ENCODE measurements at regions of chr10 and their contacts with region 1.

Region 1: DNA sequence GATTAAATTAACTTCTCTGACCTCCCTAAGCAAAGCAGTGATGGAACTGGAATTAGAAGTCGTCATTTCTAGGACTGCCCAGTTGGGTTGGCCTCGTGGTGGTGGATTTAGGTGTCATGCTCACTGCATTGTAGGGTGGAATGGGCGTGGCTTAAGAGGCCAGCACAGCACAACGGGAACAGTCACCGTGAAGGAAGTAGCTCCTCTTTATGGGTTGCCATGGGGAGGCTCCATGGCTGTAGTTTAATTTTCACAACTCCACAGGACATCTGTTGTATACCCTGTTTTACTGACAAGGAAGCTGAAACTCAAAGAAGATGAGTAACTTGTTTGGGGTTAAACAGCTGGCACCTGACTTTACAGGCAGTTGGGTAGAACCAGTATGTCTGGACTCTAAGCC is 208.3 kb downstream of the CELF2 start:
- DNase-seq: no peak
- ATAC-seq: peak; percentile 79
- H3K4me3 ChIP-seq: 0 out of 2 replicates have a peak overlapping the region, but pooled peaks have one; percentile 8
- H3K27ac ChIP-seq: peak overlapping the region; percentile 77
- H3K4me1 ChIP-seq: peaks cover 62% of the 10 kb centered on the region
- H3K27me3 ChIP-seq: no peaks in the 10 kb centered on the region
- CTCF ChIP-seq: no peak
- EP300 ChIP-seq: 0 out of 4 replicates have a peak, but pooled peaks of 1 of the 2 experiments have one; percentile 23
- POLR2A ChIP-seq: no peak
- RAD21 ChIP-seq: no peak

Region 2: GRCh38 chr10:11004144-11005077 is 221.5 kb before region 1 on chr10:
- CTCF ChIA-PET with region 1: no interaction called
- POLR2A ChIA-PET with region 1: no interaction called
- RAD21 ChIA-PET with region 1: no interaction called
- SMC1A ChIA-PET with region 1: no interaction called
- in situ Hi-C with region 1: no loop called
- intact Hi-C with region 1: no loop called
- DNase-seq: no peak
- ATAC-seq: no peak
- H3K4me3 ChIP-seq: no peak overlapping the region
- H3K27ac ChIP-seq: no peak overlapping the region
- H3K4me1 ChIP-seq: no peaks in the 10 kb centered on the region
- H3K27me3 ChIP-seq: no peaks in the 10 kb centered on the region; a peak in 1 of 4 replicates
- CTCF ChIP-seq: no peak
- EP300 ChIP-seq: no peak
- POLR2A ChIP-seq: no peak
- RAD21 ChIP-seq: no peak

Region 3: GRCh38 chr10:11170993-11171851 is 54.7 kb before region 1 on chr10:
- CTCF ChIA-PET with region 1: interaction called, 6 read pairs
- POLR2A ChIA-PET with region 1: interaction called, 4 read pairs
- RAD21 ChIA-PET with region 1: interaction called, 4 read pairs
- SMC1A ChIA-PET with region 1: interaction called, 17 read pairs
- in situ Hi-C with region 1: no loop called
- intact Hi-C with region 1: no loop called
- DNase-seq: no peak
- ATAC-seq: peak; percentile 23
- H3K4me3 ChIP-seq: peak overlapping the region; percentile 96
- H3K27ac ChIP-seq: peak overlapping the region; percentile 95
- H3K4me1 ChIP-seq: peaks cover 26% of the 10 kb centered on the region
- H3K27me3 ChIP-seq: no peaks in the 10 kb centered on the region
- CTCF ChIP-seq: no peak
- EP300 ChIP-seq: 0 out of 4 replicates have a peak, but pooled peaks of 1 of the 2 experiments have one; percentile 14
- POLR2A ChIP-seq: peak; percentile 33; the same call in 1 of the 2 replicates
- RAD21 ChIP-seq: no peak

Region 4: DNA sequence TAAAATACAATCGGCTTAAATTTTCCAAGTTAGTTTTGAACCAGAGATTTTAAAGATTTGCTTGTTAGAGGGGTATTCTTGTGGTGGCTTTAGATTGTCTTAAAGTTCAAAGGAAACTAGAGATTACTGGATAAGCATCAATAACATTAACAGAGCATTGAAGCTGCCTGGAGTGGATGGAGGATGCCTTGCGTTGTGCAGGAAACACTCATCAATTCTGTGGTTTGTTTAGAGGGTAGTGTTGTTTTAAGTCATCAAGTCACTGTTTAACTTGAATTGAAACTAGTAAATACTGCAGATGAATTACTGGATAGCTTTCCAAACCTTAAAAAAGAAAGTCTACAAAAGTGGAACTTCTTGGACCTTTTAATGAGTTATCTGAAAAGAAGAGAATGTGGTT is 10.3 kb after region 1 on chr10:
- CTCF ChIA-PET with region 1: interaction called, 27 read pairs
- POLR2A ChIA-PET with region 1: interaction called, 19 read pairs
- RAD21 ChIA-PET with region 1: interaction called, 23 read pairs
- SMC1A ChIA-PET with region 1: interaction called, 44 read pairs
- in situ Hi-C with region 1: no loop called
- intact Hi-C with region 1: no loop called
- DNase-seq: no peak
- ATAC-seq: peak; percentile 69
- H3K4me3 ChIP-seq: peak overlapping the region; percentile 36; the same call in 1 of the 2 replicates
- H3K27ac ChIP-seq: peak overlapping the region; percentile 74
- H3K4me1 ChIP-seq: peaks cover 71% of the 10 kb centered on the region
- H3K27me3 ChIP-seq: no peaks in the 10 kb centered on the region
- CTCF ChIP-seq: 0 out of 6 replicates have a peak, but pooled peaks of 1 of the 3 experiments have one; percentile 2
- EP300 ChIP-seq: peak in 1 of 2 experiments; percentile 63; a peak in 1 of 4 replicates
- POLR2A ChIP-seq: no peak
- RAD21 ChIP-seq: no peak

Measured in GM12878 (cell line).